ENCODE measurements at regions of chr12 and their contacts with region 1.

Region 1: GRCh38 chr12:442235-442884 is 17.4 kb upstream of the B4GALNT3 start:
- DNase-seq: peak; percentile 63
- ATAC-seq: peak; percentile 30
- H3K4me3 Mint-ChIP-seq: no peak overlapping the region
- H3K27ac Mint-ChIP-seq: no peak overlapping the region
- H3K4me1 Mint-ChIP-seq: no peaks in the 10 kb centered on the region
- H3K27me3 Mint-ChIP-seq: peaks cover 2% of the 10 kb centered on the region
- CTCF ChIP-seq: peak; percentile 96

Region 2: DNA sequence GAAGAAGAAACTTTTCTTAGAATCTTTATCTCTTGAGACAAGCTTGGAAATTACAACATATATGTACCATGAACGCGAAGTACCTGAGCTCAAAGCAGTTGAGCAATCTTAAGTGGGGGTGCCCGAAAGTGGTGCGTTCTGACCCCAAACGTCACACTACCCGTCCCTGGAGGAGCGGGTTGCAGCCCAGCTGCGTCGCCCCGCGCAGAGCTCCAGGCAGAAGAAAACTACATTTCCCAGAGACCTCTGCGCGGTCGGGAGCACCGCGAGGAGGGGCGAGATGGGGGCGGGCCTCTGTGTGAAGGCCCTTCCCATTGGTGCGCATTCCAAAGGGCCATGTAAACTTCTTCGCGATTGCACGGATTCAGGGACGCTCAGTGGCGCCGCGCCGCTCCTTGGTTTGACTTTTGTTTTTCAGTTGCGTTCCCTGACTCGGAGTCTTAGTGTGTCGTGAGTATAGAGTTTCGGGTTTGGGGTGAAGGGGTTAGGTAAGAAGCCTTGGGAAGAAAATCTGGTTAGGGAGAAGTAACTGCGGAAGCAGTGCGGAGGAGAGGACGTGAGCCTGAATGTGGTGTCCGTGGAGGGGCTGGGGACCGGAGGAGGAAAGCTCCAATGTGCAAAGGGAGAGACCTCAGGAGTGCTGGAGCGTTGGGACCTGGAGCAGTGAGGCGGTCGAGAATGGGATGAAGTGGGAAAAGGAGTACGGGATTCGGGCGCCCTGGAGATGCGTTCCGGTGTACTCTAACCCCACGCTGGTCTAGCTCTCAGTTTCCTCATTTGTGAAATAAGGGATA is 40.9 kb before region 1 on chr12 and contains the start of gene CCDC77:
- CTCF ChIA-PET with region 1: interaction called, 16 read pairs
- POLR2A ChIA-PET with region 1: no interaction called
- intact Hi-C with region 1: no loop called
- DNase-seq: peak; percentile 95
- ATAC-seq: peak; percentile 100
- H3K4me3 Mint-ChIP-seq: no peak within 1 kb of the TSS
- H3K27ac Mint-ChIP-seq: no peak within 1 kb of the TSS
- H3K4me1 Mint-ChIP-seq: peaks cover 3% of the 10 kb centered on the region
- H3K27me3 Mint-ChIP-seq: no peaks in the 10 kb centered on the region
- CTCF ChIP-seq: no peak
- total RNA-seq, gene CCDC77: 14.0 to 19.0 TPM

Region 3: DNA sequence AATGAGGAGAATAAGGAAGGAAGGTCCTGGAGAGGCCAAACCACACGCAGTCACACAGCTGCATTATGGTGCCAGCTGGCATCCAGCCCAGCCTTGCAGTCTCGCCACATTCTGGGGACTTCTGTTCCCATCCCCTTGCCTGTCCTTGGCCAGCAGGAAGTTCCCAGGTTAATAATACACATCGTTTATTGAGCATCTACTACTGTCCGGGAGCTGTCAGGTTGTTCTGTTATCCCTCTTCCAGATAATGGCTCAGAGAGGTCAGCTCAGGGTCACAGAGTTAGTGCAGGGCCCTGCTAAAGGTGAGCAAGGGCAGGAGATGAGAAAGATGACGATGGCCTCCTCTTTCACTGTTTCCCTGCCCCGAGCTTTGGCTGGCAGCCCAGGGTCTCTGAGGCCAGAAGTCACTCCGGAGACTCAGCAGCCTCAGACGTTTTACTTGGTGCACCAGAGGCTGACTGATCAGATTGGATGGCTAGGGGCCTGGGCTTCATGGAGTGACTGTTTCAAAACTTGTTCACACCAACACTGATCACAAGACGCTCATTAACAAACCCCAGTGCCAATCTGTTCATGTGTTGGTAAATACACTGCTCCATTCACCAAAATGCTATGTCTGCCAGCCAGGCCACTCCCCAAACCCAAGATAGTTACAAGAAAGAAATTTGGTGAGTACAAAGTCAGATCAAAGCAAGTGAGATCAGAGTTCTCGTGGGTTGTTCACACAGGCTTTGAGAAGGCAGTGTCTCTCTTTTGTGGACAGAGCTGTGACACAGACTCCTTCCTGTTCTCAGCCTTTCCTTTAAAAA is 96.6 kb after region 1 on chr12:
- CTCF ChIA-PET with region 1: interaction called, 16 read pairs
- POLR2A ChIA-PET with region 1: no interaction called
- intact Hi-C with region 1: no loop called
- DNase-seq: peak; percentile 34
- ATAC-seq: peak; percentile 91
- H3K4me3 Mint-ChIP-seq: no peak overlapping the region
- H3K27ac Mint-ChIP-seq: peak overlapping the region; percentile 49
- H3K4me1 Mint-ChIP-seq: peaks cover 19% of the 10 kb centered on the region
- H3K27me3 Mint-ChIP-seq: no peaks in the 10 kb centered on the region
- CTCF ChIP-seq: no peak

Region 4: DNA sequence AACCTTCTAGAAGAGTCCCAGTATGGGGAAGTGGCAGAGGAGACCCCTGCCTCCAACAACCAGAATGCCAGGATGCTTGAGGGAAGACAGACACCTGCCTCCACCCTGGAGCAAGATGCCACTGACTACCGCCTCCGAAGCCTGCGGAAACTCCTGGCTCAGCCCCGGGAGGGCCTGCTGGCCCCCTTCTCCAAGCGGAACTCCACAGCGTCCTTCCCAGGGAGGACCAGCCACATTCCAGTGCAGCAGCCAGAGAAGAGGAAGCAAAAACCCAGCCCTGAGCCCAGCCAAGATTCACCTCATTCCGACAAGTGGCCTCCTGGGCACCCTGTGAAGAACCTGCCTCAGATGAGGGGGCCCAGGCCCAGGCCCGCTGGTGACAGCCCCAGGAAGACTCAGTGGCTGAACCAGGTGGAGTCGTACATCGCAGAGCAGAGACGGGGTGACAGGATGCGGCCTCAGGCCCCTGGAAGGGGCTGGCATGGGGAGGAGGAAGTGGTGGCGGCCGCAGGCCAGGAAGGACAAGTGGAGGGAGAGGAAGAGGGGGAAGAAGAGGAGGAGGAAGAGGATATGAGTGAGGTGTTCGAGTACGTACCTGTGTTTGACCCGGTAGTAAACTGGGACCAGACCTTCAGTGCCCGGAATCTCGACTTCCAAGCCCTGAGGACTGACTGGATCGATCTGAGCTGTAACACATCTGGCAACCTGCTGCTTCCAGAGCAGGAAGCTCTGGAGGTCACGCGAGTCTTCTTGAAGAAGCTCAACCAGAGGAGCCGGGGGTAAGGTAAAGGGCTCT is 111.0 kb after region 1 on chr12:
- CTCF ChIA-PET with region 1: interaction called, 11 read pairs
- POLR2A ChIA-PET with region 1: no interaction called
- intact Hi-C with region 1: no loop called
- DNase-seq: peak; percentile 70
- ATAC-seq: peak; percentile 84
- H3K4me3 Mint-ChIP-seq: peak overlapping the region; percentile 85
- H3K27ac Mint-ChIP-seq: peak overlapping the region; percentile 87
- H3K4me1 Mint-ChIP-seq: peaks cover 42% of the 10 kb centered on the region
- H3K27me3 Mint-ChIP-seq: no peaks in the 10 kb centered on the region
- CTCF ChIP-seq: no peak